Ovary (tissue), 10 donors: ENCODE measurements at regions of chr15 and their contacts with region 1.

Region 1: GRCh38 chr15:69058830-69059556 is 44.5 kb downstream of the NOX5 start:
- DNase-seq: peak; percentile 86 to 94 (median 90)
- H3K4me3 ChIP-seq: no peak overlapping the region
- H3K27ac ChIP-seq: no peak overlapping the region
- H3K4me1 ChIP-seq: peaks cover 7% of the 10 kb centered on the region
- H3K27me3 ChIP-seq: no peaks in the 10 kb centered on the region
- CTCF ChIP-seq: peak; percentile 63 to 86 (median 77)
- EP300 ChIP-seq: no peak
- POLR2A ChIP-seq: no peak

Region 2: GRCh38 chr15:69265347-69265955 is 206.5 kb after region 1 on chr15:
- intact Hi-C with region 1: loop called in 2 of 4 experiments (anchors 10 kb)
- DNase-seq: no peak
- H3K4me3 ChIP-seq: no peak overlapping the region
- H3K27ac ChIP-seq: no peak overlapping the region
- H3K4me1 ChIP-seq: no peaks in the 10 kb centered on the region
- H3K27me3 ChIP-seq: no peaks in the 10 kb centered on the region
- CTCF ChIP-seq: no peak
- EP300 ChIP-seq: no peak
- POLR2A ChIP-seq: no peak

Region 3: DNA sequence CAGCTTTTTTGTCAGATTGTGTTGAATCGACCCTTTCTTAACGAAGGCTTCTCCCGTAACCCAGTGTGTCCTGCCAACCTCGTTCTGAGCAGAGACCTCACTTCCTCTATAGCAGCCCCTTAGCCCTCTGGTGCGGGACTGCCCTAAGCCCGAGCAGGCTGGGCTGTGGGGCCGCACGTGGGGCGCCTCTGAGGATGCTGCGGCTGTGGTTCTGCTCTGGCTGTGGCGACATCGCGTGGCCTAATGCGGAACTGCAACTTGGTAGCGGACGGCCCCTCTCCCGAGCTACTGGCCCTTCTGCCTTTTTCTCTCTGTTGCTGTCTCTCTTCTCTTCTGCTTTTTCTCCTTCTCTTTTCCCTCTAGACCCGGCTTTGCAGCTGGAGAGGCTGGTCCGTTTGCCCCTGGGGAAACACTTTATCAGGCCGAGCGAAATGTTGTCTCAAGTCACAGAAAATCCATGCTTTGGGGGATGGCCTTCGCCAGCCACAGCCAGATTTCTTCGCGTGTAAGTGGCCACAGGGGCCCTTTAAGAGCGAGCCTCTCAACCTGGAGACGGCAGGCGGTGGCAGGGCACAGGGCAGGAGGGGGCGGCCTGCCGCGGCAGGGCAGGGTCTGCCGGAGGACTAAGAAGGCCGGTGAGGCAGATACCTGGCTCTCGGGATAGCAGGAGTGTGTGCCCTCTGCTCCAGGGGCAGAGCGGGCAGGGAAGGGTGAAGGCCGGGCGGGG is 335.7 kb after region 1 on chr15:
- intact Hi-C with region 1: loop called (anchors 2 to 5 kb)
- DNase-seq: peak; percentile 82 to 94 (median 89)
- H3K4me3 ChIP-seq: peak overlapping the region; percentile 7
- H3K27ac ChIP-seq: peak overlapping the region in 1 of 2 donors; percentile 26
- H3K4me1 ChIP-seq: no peaks in the 10 kb centered on the region
- H3K27me3 ChIP-seq: no peaks in the 10 kb centered on the region
- CTCF ChIP-seq: peak; percentile 83 to 94 (median 92)
- EP300 ChIP-seq: no peak
- POLR2A ChIP-seq: no peak